ENCODE measurements at regions of chr1 and their contacts with region 1.

Region 1: DNA sequence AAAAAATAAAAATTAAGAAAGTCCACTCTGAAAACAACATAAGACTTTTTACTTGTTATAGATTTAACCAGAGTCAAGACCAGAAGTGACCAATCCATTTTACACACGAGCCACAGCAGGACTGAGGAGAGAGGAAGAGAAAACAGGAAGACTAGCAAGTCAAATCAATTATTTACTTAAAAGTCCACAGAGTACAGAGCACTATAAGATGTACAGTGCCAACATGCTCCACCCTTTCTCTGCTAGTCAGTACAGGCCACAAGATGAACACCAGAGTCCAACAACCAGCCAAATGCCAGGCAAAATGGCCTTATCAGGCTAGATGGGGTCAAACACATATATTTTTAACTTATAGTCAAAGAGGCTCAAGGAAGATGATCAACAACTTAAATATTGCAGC is 19.5 kb downstream of the LUZP1 start:
- DNase-seq: no peak
- H3K4me3 Mint-ChIP-seq: no peak overlapping the region
- H3K27ac Mint-ChIP-seq: no peak overlapping the region
- H3K4me1 Mint-ChIP-seq: peaks cover 23% of the 10 kb centered on the region
- H3K27me3 Mint-ChIP-seq: no peaks in the 10 kb centered on the region

Region 2: GRCh38 chr1:23168457-23169194 is 19.5 kb after region 1 on chr1 and contains the start of gene LUZP1:
- intact Hi-C with region 1: loop called (anchors 2 kb)
- DNase-seq: peak; percentile 95
- H3K4me3 Mint-ChIP-seq: peak within 1 kb of the TSS; percentile 97
- H3K27ac Mint-ChIP-seq: peak within 1 kb of the TSS; percentile 91
- H3K4me1 Mint-ChIP-seq: peaks cover 21% of the 10 kb centered on the region
- H3K27me3 Mint-ChIP-seq: peaks cover 2% of the 10 kb centered on the region
- total RNA-seq, gene LUZP1: 21.6 and 23.2 TPM in 2 replicates